ENCODE measurements at regions of chr10 and their contacts with region 1.

Region 1: DNA sequence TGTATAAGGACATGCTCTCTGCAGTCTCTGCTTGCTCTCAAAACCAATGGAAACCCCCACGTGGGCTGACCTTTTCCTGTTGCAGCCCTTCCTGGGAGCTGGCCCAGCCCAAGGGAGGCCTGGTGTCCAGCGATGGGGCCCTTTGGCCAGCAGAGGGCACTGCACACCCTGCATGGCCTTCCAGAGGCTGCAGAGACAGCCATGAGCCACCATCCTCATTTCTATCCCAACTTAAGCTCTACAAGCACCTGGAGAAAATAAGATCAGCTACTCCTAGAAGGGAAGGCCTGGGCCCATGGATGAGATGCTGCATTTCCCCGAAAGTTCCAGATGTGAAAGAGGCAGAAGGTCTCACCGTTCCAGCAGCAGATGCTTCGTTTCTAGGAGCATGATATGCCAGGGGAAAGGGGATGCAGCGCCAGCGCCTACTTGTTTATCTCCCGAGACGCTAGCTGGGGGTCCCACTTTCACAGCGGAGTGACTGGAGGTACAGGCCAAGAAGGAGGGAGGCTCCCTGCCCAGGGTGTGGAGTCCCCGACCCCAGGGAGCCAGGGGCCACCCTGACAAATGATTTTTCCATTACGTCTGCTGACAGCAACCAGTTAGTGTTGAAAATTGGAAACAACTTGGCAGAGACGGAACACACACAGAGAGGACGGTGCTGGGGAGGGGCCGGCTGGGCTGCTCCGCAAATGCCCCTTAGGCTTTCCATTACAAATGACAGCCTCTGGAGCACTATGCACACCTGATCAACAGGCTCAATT is 106.4 kb downstream of the ZRANB1 start:
- DNase-seq: peak; percentile 87
- ATAC-seq: peak; percentile 97
- H3K4me3 ChIP-seq: no peak overlapping the region
- H3K27ac ChIP-seq: no peak overlapping the region
- H3K4me1 ChIP-seq: peaks cover 23% of the 10 kb centered on the region
- H3K27me3 ChIP-seq: no peaks in the 10 kb centered on the region
- CTCF ChIP-seq: peak; percentile 98
- POLR2A ChIP-seq: peak; percentile 51
- RAD21 ChIP-seq: peak; percentile 98

Region 2: GRCh38 chr10:124665980-124666379 is 382.3 kb before region 1 on chr10:
- CTCF ChIA-PET with region 1: no interaction called
- POLR2A ChIA-PET with region 1: no interaction called
- dilution Hi-C with region 1: no loop called
- in situ Hi-C with region 1: no loop called
- intact Hi-C with region 1: no loop called
- DNase-seq: no peak
- ATAC-seq: peak; percentile 61
- H3K4me3 ChIP-seq: no peak overlapping the region
- H3K27ac ChIP-seq: no peak overlapping the region
- H3K4me1 ChIP-seq: peaks cover 7% of the 10 kb centered on the region; the same call in 1 of the 2 replicates
- H3K27me3 ChIP-seq: no peaks in the 10 kb centered on the region
- CTCF ChIP-seq: no peak
- POLR2A ChIP-seq: no peak
- RAD21 ChIP-seq: no peak

Region 3: DNA sequence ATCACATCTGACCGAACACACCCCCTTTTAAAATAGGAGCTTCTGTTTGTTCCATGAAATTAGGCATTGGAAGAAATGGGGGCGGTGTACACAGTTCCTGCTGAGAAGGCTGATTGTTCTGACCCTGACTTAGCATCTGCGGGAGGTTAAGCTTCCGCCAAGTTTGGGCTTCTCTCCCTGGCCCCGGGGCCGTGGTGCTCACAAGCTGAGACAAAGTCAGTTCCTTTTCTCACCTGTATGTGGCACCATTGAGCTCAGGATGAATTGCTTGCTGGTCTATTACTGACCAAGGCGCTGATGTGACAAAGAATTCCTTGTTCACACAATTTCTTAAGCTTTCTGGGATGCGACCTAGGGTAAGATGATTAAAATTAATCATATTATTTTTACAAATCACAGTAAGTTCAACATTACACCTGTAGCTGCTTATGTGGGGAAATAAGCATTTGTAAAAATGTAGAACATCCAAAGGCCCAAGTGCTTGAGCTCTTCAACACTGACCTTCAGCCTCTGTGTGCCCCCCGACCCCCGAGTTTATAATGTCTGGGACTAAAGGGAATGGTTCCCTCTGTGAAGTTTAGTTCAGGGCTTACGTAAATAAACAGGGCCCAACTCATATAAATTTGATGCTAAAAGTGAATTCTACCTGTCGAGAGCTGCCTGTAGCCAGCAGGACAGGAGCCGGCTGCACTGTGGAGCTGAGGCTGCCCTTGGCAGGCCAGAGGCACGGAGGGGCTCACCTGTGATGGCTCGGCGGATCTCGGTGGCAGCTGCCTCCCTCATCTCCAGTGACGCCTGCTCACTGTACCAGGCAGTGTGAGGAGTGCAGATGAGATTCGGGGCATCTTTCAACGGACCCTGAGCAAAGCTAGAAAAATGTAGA is 55.6 kb before region 1 on chr10:
- CTCF ChIA-PET with region 1: interaction called, 11 read pairs
- POLR2A ChIA-PET with region 1: no interaction called
- dilution Hi-C with region 1: no loop called
- in situ Hi-C with region 1: no loop called
- intact Hi-C with region 1: no loop called
- DNase-seq: peak; percentile 63
- ATAC-seq: peak; percentile 74
- H3K4me3 ChIP-seq: no peak overlapping the region
- H3K27ac ChIP-seq: no peak overlapping the region
- H3K4me1 ChIP-seq: no peaks in the 10 kb centered on the region
- H3K27me3 ChIP-seq: no peaks in the 10 kb centered on the region
- CTCF ChIP-seq: peak; percentile 47
- POLR2A ChIP-seq: no peak
- RAD21 ChIP-seq: peak; percentile 55

Region 4: DNA sequence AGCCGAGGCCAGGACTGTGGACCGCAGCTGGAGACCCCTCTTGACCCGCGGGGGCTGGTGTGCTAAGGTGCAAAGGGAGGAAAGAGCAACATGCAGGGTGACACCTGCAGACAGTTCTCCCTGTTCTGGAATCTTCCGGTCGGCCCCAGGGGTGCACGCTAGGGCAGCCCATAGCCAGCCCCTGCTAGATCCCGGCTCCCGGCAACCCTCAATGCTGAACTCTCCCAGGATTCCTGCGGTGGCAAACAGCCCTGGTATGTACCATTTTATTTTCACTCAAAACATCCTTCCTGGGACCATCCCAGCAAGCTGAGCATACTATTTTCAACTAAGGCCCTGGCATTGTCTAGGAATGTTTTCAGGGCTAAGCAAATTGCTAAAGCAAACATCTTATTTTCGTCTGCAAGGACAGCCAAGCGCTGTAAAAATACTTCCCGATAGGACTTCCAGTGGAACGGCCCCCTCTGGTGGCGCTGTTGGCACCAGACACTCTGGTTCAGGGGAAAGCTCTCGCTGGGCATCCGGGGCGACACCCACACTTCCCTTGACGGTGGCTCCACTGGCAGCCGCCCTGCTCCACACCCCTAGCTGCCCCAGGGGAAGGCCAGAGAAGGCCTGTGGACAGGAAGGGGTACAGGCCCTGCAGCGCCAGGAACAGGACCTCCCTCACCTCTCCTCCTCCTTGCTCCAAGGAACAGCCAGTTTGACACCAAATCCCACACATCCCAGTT is 12.7 kb after region 1 on chr10:
- CTCF ChIA-PET with region 1: interaction called, 11 read pairs
- POLR2A ChIA-PET with region 1: no interaction called
- dilution Hi-C with region 1: no loop called
- in situ Hi-C with region 1: no loop called
- intact Hi-C with region 1: no loop called
- DNase-seq: peak; percentile 80
- ATAC-seq: peak; percentile 58
- H3K4me3 ChIP-seq: no peak overlapping the region
- H3K27ac ChIP-seq: peak overlapping the region; percentile 13; the same call in 1 of the 2 replicates
- H3K4me1 ChIP-seq: peaks cover 50% of the 10 kb centered on the region
- H3K27me3 ChIP-seq: no peaks in the 10 kb centered on the region
- CTCF ChIP-seq: peak; percentile 88
- POLR2A ChIP-seq: no peak
- RAD21 ChIP-seq: peak; percentile 84

Region 5: GRCh38 chr10:125231116-125231812 is 183.0 kb after region 1 on chr10:
- CTCF ChIA-PET with region 1: no interaction called
- POLR2A ChIA-PET with region 1: no interaction called
- dilution Hi-C with region 1: no loop called
- in situ Hi-C with region 1: no loop called
- intact Hi-C with region 1: loop called (anchors 10 kb)
- DNase-seq: peak; percentile 98
- ATAC-seq: peak; percentile 96
- H3K4me3 ChIP-seq: no peak overlapping the region
- H3K27ac ChIP-seq: peak overlapping the region; percentile 46
- H3K4me1 ChIP-seq: peaks cover 12% of the 10 kb centered on the region
- H3K27me3 ChIP-seq: no peaks in the 10 kb centered on the region
- CTCF ChIP-seq: peak; percentile 23; the same call in 1 of the 2 replicates
- POLR2A ChIP-seq: no peak; the same call in 1 of the 2 replicates
- RAD21 ChIP-seq: peak; percentile 39

Region 6: DNA sequence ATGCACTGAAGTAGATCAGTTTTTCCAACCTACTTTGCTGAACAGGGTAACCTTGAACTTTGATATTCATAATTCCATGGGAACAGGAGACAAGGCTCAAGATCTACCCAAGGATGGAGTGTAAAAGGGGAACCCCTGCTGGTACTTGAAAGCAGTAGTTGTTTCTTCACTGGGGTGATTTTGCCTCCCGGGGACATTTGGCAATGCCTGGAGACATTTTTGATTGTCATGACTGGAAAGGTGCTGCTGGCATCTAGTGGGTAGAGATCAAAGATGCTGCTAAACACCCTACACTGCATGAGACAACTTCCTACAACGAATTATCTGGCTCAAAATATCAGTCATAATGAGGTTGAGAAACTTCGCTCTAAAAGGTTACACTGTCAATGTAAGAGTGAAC is 326.9 kb after region 1 on chr10:
- CTCF ChIA-PET with region 1: no interaction called
- POLR2A ChIA-PET with region 1: no interaction called
- dilution Hi-C with region 1: no loop called
- in situ Hi-C with region 1: no loop called
- intact Hi-C with region 1: loop called (anchors 2 kb)
- DNase-seq: peak; percentile 2
- ATAC-seq: no peak
- H3K4me3 ChIP-seq: no peak overlapping the region
- H3K27ac ChIP-seq: no peak overlapping the region
- H3K4me1 ChIP-seq: no peaks in the 10 kb centered on the region
- H3K27me3 ChIP-seq: peaks cover 1% of the 10 kb centered on the region; the same call in 1 of the 2 replicates
- CTCF ChIP-seq: peak; percentile 25
- POLR2A ChIP-seq: no peak
- RAD21 ChIP-seq: peak; percentile 13; the same call in 1 of the 2 replicates

Region 7: DNA sequence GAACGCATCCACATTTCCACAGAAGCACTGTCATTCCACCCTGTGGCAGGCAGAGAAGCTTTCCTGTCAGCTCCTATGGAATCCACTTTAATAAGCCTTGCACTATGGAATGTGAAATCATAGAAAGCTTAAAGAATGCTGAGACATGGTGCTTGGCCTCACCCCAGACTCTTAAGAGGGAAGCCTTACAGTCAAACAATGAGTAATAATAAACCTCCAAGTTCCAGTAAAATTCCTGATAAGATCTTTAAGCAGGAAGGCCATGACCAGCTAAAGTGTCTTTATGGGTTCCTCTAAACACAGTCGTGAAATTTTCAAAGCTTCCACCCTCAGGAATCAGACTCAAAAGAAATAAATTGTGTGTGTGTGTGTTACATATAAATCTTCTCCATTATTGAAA is 646.6 kb after region 1 on chr10:
- CTCF ChIA-PET with region 1: no interaction called
- POLR2A ChIA-PET with region 1: no interaction called
- dilution Hi-C with region 1: no loop called
- in situ Hi-C with region 1: loop called (anchors 10 kb)
- intact Hi-C with region 1: loop called (anchors 5 kb)
- DNase-seq: peak; percentile 85
- ATAC-seq: peak; percentile 86
- H3K4me3 ChIP-seq: no peak overlapping the region
- H3K27ac ChIP-seq: no peak overlapping the region; the same call in 1 of the 2 replicates
- H3K4me1 ChIP-seq: peaks cover 5% of the 10 kb centered on the region; the same call in 1 of the 2 replicates
- H3K27me3 ChIP-seq: peaks cover 11% of the 10 kb centered on the region
- CTCF ChIP-seq: no peak
- POLR2A ChIP-seq: no peak
- RAD21 ChIP-seq: no peak

Region 8: GRCh38 chr10:125812128-125812750 is 764.0 kb after region 1 on chr10:
- CTCF ChIA-PET with region 1: no interaction called
- POLR2A ChIA-PET with region 1: interaction called, 11 read pairs
- dilution Hi-C with region 1: no loop called
- in situ Hi-C with region 1: no loop called
- intact Hi-C with region 1: no loop called
- DNase-seq: peak; percentile 58
- ATAC-seq: no peak
- H3K4me3 ChIP-seq: no peak overlapping the region
- H3K27ac ChIP-seq: no peak overlapping the region
- H3K4me1 ChIP-seq: no peaks in the 10 kb centered on the region
- H3K27me3 ChIP-seq: no peaks in the 10 kb centered on the region
- CTCF ChIP-seq: no peak
- POLR2A ChIP-seq: no peak
- RAD21 ChIP-seq: no peak

Measured in IMR-90 (cell line).